ENCODE measurements at regions of chr16 and their contacts with region 1.

Region 1: DNA sequence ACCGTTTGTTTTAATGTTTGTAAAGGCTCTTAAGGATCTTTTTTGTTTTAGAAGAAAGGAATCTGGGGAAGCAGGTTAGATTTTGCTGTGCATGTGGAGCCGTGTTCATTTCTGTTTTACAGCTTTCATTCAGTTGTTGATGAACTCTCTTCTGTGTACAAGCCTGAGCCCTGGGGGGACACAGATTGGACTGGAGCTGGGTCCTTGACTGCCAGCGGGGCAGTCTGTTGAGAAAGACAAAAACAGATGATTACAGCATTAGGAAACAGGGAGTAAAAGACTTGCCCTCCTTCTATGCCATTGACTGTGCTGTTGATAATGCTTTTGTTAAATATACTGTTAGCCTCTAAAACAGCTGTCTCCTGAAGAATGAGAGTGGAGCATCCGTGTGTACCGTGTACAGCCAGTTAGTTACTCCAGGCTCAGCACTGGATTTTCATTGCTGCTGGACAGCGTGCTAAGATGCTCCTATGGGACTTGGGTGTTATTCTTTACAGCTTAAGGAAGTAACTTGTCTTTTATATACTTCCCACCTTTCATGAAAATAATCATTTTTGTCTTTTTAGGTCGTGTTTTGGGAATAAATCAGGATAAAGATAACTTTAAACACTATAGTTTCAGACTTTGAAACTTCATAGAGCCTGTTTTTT is 3.2 kb downstream of the MAP1LC3B start:
- DNase-seq: peak in 1 of 10 donors; percentile 5
- H3K4me3 ChIP-seq: peak overlapping the region in 3 of 59 donors; percentile 0 to 19 (median 3)
- H3K27ac ChIP-seq: no peak overlapping the region
- H3K27me3 ChIP-seq: no peaks in the 10 kb centered on the region
- CTCF ChIP-seq: no peak

Region 2: DNA sequence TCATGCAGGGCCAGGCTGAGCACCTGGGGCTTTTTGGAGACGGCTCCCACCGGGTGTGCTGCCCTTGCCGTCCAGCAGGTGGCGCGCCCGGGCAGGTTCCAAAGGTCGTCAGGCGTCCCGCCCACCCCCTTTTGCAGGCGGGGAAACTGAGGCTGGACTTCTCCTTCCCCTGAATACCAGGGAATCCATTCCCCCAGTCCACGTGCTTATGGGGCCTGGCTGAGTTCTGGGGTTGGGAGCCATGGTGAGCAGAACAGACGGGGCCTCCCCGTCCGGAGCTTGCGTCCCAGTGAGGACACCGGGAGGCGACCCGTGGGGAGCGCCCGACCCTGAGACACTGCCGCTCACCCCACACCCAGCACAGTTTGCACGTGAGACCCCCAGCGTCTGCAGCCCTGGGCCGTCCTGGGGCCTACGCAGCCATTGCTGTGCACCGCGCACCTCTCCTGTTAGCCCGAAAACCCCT is 155.2 kb after region 1 on chr16:
- intact Hi-C with region 1: loop called in 1 of 2 experiments (anchors 5 kb)
- DNase-seq: peak in 6 of 10 donors; percentile 34 to 73 (median 44)
- H3K4me3 ChIP-seq: no peak overlapping the region
- H3K27ac ChIP-seq: no peak overlapping the region
- H3K27me3 ChIP-seq: no peaks in the 10 kb centered on the region
- CTCF ChIP-seq: peak in 55 of 56 donors; percentile 58 to 94 (median 87)